SK-N-SH (cell line): ENCODE measurements at regions of chr1 and their contacts with region 1.

Region 1: DNA sequence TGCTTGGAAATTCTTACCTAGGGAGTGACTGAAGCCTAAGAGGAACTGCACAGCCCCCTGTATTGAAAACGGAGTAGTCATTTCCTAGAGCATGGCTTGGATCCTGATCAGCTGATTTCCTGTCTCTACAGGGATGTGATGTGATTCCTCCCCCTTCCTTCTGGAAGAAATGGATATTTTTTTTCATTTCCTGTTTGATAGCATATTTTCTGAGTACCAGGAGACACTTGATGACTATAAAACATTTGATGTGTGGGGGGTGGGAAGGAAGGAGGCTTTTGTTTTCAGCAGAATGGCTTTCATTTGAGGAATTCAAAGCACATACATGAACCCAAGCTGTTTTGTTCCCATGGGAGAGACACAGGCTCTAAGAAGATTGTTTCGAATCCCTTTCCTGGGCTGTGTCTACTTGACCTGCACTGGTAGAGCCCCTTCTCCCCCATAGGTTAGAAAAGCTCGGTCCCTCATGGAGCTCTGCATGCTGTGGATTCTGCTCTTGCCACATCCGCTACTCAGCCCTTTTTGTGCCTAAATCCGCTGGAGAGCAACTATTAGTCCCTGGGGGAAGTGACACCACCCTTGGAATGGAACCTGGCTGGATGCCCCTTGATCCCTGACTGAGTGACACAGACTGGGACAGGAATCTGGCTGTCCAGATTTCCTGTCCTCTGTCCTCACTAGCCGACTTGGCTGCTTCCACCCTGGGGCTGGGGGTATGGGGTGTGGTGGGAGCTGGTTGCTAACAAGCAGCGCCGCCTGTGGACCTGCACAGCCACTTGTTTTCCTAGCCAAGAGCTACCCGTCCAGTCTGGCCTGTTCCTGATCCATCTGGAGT is 71.8 kb upstream of the MACF1 start:
- DNase-seq: peak; percentile 64
- H3K4me3 ChIP-seq: no peak overlapping the region
- H3K27ac ChIP-seq: peak overlapping the region; percentile 64 to 94
- H3K4me1 ChIP-seq: peaks cover 16 to 46% of the 10 kb centered on the region in 2 experiments
- H3K27me3 ChIP-seq: no peaks in the 10 kb centered on the region
- CTCF ChIP-seq: no peak
- EP300 ChIP-seq: no peak
- RAD21 ChIP-seq: peak; percentile 27

Region 2: DNA sequence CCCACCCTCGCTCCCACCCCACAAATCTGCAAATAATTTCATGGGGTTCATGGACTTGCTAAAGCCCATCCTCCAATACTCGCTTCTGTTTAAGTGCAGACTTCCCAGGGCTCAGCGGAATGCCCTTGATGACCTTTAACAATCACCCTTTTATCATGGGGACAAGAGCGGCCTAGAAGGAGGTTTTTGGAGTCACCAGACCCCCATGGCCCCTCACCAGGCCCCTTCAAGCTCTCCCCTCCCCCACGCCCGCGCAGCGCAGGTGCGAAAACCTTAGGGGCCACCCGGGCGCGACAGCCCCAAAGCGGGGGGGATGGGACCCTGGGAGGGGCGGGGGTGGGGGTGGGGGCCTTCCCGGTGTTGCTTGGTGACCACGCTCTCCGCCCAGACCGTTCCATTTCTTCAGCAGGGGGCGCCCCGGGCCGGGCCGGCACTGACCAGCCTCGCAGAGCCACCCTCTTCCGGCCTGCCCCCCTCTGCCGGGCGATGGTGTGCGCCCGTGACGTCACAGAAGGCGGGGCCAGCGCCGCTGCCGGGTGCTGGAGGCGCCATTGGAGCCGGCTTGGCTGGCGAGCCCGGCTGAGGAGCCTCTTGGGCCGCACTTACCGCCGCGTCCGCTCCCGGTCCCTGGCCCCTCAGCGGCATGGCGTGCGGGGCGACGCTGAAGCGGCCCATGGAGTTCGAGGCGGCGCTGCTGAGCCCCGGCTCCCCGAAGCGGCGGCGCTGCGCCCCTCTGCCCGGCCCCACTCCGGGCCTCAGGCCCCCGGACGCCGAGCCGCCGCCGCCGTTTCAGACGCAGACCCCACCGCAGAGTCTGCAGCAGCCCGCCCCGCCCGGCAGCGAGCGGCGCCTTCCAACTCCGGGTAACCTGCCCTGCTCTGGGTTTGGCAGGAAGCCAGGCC is 141.7 kb before region 1 on chr1 and contains the start of gene AKIRIN1:
- CTCF ChIA-PET with region 1: no interaction called
- POLR2A ChIA-PET with region 1: no interaction called
- DNase-seq: peak; percentile 99
- H3K4me3 ChIP-seq: peak within 1 kb of the TSS; percentile 67 to 72
- H3K27ac ChIP-seq: peak within 1 kb of the TSS; percentile 82 to 87
- H3K4me1 ChIP-seq: peaks cover 0 to 7% of the 10 kb centered on the region in 2 experiments; a peak in 3 of 4 replicates
- H3K27me3 ChIP-seq: no peaks in the 10 kb centered on the region
- CTCF ChIP-seq: no peak
- EP300 ChIP-seq: peak; percentile 8 to 73; a peak in 1 of 4 replicates
- RAD21 ChIP-seq: no peak
- polyA plus RNA-seq, gene AKIRIN1: 37.0 and 50.7 TPM in 2 replicates

Region 3: GRCh38 chr1:39154553-39155421 is 22.1 kb after region 1 on chr1:
- CTCF ChIA-PET with region 1: no interaction called
- POLR2A ChIA-PET with region 1: no interaction called
- DNase-seq: no peak
- H3K4me3 ChIP-seq: no peak overlapping the region
- H3K27ac ChIP-seq: peak overlapping the region in 1 of 2 experiments; percentile 93; a peak in 2 of 4 replicates
- H3K4me1 ChIP-seq: peaks cover 7 to 65% of the 10 kb centered on the region in 2 experiments; a peak in 3 of 4 replicates
- H3K27me3 ChIP-seq: no peaks in the 10 kb centered on the region
- CTCF ChIP-seq: no peak
- EP300 ChIP-seq: no peak
- RAD21 ChIP-seq: no peak

Region 4: GRCh38 chr1:39189592-39190041 is 56.9 kb after region 1 on chr1:
- CTCF ChIA-PET with region 1: interaction called, 46 read pairs
- POLR2A ChIA-PET with region 1: no interaction called
- DNase-seq: no peak
- H3K4me3 ChIP-seq: no peak overlapping the region
- H3K27ac ChIP-seq: peak overlapping the region; percentile 14 to 99; a peak in 3 of 4 replicates
- H3K4me1 ChIP-seq: peaks cover 5 to 68% of the 10 kb centered on the region in 2 experiments; a peak in 3 of 4 replicates
- H3K27me3 ChIP-seq: no peaks in the 10 kb centered on the region
- CTCF ChIP-seq: no peak
- EP300 ChIP-seq: peak; percentile 18 to 61; a peak in 3 of 4 replicates
- RAD21 ChIP-seq: no peak

Region 5: DNA sequence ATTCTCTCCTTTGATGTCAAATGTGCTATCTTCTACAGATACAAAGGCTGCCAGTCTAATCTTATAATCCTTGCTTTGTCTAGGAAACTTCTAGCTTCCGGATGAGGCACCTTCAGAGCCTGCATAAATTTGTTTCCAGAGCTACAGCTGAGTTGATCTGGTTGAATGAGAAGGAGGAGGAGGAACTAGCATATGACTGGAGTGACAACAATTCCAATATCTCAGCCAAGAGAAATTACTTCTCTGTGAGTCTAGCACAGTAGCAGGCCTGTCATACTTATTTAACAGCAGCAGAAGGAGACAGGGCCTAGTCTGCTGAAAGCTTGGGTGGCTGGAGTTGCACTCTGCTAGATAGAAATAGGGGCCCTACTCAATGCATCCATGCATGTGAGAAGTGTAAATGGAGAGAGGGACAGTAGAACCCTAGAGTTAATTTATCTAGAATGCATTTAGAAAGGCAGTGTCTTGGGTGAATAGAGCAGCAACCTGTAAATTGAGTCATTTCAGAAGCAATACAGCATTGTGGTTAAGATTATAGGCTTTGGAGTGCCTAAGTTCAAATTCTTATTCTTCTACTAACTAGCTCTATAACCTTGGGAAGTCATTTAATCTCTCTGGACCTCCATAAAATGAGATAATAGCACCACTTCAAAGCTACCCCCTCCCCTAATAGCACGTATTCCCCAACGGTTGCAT is 160.8 kb after region 1 on chr1:
- CTCF ChIA-PET with region 1: no interaction called
- POLR2A ChIA-PET with region 1: no interaction called
- DNase-seq: no peak
- H3K4me3 ChIP-seq: no peak overlapping the region
- H3K27ac ChIP-seq: peak overlapping the region in 1 of 2 experiments; percentile 17; a peak in 1 of 4 replicates
- H3K4me1 ChIP-seq: peaks cover 0 to 23% of the 10 kb centered on the region in 2 experiments; a peak in 1 of 4 replicates
- H3K27me3 ChIP-seq: no peaks in the 10 kb centered on the region
- CTCF ChIP-seq: no peak
- EP300 ChIP-seq: no peak
- RAD21 ChIP-seq: no peak